ENCODE measurements at regions of chr20 and their contacts with region 1.

Region 1: DNA sequence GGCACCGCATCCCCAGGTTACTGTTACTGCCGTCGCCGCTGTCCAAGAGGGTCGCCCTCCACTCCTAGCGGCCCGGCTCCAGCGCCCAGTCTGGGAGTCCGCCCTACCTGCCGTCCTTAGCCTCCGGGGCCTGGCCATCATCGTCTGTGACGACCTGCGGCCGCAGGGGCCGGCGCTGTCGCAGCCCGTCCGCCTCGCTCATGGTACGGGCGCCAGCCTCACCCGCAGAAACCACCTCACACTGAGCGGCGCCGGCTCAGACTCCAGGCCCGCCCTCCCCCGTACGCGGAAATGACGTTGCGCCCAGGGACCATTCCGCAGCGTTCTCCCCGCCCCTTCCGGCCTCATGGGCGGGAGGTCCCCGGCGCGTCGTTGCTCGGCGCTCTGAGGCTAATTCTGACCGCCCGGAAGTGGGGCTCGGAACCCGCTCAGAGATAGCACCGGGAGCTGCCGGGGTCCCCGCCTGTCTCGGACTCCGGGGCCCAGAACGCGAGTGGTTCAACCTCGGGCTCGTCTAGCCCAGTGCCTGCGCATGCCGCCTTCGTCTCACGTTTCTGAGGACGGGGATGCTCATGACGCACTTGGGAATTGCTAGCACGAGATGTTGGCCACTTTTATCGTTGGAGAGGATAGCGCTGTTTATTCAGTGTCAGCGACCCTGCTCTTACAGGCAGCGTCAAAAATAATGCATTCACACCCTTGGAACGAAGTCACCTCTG is at the start of gene APMAP:
- DNase-seq: peak; percentile 98
- CTCF ChIP-seq: no peak

Region 2: DNA sequence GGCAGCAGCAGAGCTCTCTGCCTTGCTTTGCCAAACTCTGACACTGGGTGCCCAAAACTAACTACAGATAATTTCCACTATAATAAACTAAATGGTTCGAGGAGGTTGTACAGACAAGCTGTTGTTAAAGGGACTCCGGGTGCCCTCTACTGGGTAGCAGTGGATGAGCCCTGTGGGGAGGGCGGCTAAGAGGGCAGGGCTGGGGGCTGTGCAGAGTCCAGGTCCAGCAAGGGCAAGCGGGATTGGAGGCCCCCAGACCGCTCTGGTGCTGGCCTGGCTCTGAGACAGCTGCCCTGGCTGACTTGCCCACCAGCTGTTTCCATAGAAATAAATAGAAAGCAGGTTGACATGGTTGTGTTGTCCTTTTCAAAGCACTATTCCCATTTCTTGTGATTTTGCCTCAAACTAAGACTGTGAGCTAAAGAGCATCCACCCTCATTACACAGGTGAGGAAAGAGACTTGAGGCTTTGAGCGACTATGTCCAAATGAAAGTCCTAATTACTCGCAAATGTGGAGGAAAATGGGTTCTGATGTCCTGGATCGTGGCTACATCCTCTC is 211.1 kb before region 1 on chr20:
- in situ Hi-C with region 1: no loop called
- DNase-seq: no peak
- CTCF ChIP-seq: peak; percentile 25

Region 3: DNA sequence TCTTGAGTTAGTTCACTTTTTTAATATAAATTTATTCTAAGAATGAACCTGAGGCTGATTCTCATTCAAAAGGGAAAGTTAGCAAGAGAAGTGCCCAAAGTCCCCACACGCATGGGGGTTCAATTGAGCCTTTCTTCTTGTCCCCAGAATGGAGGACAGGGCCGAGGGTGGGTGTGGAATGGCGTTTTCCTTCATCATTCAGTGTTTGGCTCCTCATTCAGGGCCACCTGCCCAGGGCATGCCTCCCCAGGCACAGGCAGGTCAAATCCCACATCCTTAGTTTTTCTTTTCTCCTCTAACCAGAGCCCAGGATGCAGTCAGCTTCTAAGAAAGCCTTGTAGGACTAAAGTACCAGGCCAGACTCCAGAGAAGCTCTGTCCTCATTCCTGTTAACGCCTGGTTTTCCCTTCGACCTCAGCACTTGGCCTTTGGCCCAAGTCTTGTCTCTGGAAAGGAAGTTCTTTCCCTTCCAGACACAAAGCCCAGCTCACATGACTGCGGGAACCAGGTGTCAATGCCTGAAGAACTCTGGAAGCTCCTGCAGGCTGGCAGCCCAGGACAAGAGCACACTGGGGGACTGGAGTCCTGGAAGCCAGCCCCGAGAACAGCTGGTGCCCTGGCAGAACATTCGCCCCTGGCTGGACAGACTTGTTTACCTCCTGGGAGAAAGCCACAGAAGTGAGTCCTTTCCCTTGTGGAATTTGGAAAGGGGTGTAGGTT is 46.9 kb after region 1 on chr20:
- in situ Hi-C with region 1: no loop called
- DNase-seq: no peak
- CTCF ChIP-seq: no peak

Region 4: GRCh38 chr20:25065625-25066338 is 73.1 kb after region 1 on chr20:
- in situ Hi-C with region 1: loop called (anchors 5 kb)
- DNase-seq: peak; percentile 76
- CTCF ChIP-seq: peak; percentile 52

Region 5: DNA sequence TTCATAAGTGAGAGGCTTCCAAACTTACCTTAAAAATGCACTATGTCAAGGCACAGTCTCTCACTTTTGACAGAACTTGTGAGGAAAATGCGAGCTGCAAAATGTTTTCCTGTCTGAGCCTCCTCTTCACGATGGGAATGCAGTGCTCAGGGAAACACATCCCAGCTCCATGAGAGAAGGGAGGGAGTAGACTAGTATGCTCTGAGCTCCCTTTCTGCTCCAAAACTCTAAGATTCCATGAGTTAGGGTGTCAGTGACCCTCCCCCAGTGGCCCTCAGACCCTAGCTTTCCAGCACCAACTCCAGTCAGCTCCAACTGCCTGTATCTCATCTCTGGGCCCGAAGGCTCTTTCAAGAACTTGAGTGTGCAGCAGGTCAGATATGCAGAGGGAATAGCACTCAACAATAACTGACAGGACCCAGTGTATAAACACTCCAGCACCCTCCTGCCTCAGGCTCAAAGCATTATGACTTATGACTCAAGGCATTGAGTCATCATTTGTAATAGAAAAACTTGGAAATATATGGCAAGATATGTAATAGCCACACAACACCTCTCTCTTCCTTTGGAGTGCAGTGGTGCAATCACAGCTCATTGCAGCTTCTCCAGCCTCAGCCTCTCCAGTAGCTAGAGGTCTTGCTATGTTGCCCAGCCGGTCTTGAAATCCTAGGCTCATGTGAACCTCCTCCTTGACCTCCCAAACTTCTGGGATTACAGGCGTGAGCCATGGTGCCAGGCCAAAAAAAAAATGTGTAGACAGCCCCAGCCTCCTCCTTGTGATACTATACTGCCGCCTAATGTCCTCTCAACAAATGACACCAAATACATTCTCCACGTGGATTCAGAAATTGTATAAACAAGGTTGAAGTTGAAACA is 186.2 kb after region 1 on chr20:
- in situ Hi-C with region 1: loop called (anchors 10 kb)
- DNase-seq: peak; percentile 63
- CTCF ChIP-seq: peak; percentile 79

Region 6: GRCh38 chr20:25407311-25408169 is 414.9 kb after region 1 on chr20 and contains the start of gene GINS1:
- in situ Hi-C with region 1: loop called (anchors 10 kb)
- DNase-seq: peak; percentile 93
- CTCF ChIP-seq: no peak